AG04450 (cell line): ENCODE measurements at regions of chr11 and their contacts with region 1.

Region 1: DNA sequence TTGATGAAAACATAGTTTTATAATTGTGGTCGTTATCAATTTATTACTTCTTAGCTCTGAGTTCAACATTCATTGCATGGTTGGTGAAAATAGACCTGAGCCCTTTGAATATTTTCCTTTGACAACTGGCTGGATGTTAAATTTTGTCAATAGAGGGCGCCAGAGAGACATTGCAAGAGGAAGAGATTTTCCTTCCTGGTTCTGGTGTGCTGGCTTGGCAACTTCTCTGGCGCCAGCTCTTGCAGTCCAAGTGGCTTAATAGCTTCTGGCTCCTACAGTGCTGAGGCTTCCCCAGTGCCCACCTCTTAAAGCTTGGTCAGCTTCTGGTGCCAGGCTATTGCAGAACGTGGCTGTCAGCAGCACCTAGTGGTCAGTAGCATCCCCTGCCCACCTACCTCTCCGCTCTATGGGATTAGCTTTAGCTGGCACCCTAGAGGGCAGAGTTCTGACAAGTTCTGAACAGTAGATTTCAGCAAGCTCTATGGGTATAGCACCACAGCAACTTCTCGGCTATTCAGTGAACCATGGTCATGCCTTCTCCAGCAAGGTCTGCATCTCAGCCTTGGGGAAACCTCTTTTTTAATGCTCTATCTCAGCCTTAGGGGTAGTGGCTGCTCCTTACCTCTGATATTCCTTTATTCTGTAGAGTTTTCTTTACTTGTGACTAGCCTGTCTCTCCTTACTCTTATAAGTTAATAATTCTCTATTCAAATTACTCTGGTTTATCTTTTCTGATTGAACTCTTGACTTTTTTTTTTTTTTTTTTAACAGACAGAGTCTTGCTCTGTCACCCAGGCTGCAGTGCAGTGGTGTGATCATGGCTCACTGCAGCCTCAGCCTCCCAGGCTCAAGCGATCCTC is 59.4 kb downstream of the ACER3 start:
- DNase-seq: peak; percentile 65
- H3K4me3 ChIP-seq: no peak overlapping the region
- H3K27ac ChIP-seq: no peak overlapping the region
- H3K27me3 ChIP-seq: no peaks in the 10 kb centered on the region
- CTCF ChIP-seq: peak; percentile 98

Region 2: GRCh38 chr11:76742902-76743301 is 177.2 kb before region 1 on chr11:
- CTCF ChIA-PET with region 1: interaction called, 14 read pairs
- POLR2A ChIA-PET with region 1: no interaction called
- DNase-seq: peak; percentile 23
- H3K4me3 ChIP-seq: no peak overlapping the region
- H3K27ac ChIP-seq: no peak overlapping the region
- H3K27me3 ChIP-seq: peaks cover 5% of the 10 kb centered on the region
- CTCF ChIP-seq: no peak

Region 3: DNA sequence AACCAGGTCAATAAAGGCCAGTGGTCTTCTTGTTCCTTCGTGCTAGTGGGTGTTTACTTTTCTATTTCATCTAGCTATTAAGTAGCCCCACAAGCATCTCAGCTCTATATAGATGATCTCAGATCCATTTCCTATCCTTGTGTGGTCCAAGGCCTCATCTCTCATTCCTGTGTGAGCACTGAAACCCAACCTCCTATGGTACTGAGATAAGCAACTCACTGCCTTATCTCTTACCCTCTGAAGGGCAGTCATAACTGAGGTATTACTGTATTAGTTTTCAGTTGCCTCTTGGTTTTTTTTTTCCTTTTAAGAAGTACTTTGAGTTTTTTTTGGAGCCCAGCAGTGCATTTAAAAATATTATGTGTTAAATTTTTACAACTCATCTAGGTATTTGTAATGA is 31.1 kb before region 1 on chr11:
- CTCF ChIA-PET with region 1: interaction called, 48 read pairs
- POLR2A ChIA-PET with region 1: no interaction called
- DNase-seq: no peak
- H3K4me3 ChIP-seq: no peak overlapping the region
- H3K27ac ChIP-seq: no peak overlapping the region
- H3K27me3 ChIP-seq: no peaks in the 10 kb centered on the region
- CTCF ChIP-seq: no peak

Region 4: DNA sequence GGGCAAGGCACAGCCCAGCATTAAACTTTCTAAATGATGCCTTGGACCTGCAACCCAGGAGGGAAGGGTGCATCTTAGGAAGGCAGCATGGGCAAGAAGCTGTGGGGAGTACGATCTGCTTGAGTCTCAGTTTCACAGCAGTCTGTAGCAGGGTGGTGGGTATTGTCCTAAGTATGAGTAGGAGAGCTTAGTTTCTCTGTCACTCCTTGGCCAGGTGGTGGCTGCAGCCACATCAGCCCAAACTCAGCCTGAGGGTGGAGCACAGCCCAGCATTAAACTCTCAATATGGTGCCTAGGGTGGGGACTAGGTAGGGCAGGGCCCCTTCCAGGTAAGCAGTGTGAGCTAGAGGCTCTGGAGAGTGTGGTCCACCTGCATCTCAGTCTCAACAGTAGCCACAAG is 26.1 kb after region 1 on chr11:
- CTCF ChIA-PET with region 1: interaction called, 15 read pairs
- POLR2A ChIA-PET with region 1: no interaction called
- DNase-seq: no peak
- H3K4me3 ChIP-seq: no peak overlapping the region
- H3K27ac ChIP-seq: no peak overlapping the region
- H3K27me3 ChIP-seq: no peaks in the 10 kb centered on the region
- CTCF ChIP-seq: no peak

Region 5: DNA sequence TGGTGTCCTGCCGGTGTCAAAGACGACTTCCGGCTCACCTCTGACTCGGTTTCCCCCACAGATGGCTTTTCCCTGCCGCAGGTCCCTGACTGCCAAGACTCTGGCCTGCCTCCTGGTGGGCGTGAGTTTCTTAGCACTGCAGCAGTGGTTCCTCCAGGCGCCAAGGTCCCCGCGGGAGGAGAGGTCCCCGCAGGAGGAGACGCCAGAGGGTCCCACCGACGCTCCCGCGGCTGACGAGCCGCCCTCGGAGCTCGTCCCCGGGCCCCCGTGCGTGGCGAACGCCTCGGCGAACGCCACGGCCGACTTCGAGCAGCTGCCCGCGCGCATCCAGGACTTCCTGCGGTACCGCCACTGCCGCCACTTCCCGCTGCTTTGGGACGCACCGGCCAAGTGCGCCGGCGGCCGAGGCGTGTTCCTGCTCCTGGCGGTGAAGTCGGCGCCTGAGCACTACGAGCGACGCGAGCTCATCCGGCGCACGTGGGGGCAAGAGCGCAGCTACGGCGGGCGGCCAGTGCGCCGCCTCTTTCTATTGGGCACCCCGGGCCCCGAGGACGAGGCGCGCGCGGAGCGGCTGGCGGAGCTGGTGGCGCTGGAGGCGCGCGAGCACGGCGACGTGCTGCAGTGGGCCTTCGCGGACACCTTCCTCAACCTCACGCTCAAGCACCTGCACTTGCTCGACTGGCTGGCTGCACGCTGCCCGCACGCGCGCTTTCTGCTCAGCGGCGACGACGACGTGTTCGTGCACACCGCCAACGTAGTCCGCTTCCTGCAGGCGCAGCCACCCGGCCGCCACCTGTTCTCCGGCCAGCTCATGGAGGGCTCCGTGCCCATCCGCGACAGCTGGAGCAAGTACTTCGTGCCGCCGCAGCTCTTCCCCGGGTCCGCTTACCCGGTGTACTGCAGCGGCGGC is 119.6 kb after region 1 on chr11:
- CTCF ChIA-PET with region 1: interaction called, 16 read pairs
- POLR2A ChIA-PET with region 1: no interaction called
- DNase-seq: no peak
- H3K4me3 ChIP-seq: peak overlapping the region; percentile 43
- H3K27ac ChIP-seq: no peak overlapping the region
- H3K27me3 ChIP-seq: peaks cover 14% of the 10 kb centered on the region
- CTCF ChIP-seq: peak; percentile 58

Region 6: DNA sequence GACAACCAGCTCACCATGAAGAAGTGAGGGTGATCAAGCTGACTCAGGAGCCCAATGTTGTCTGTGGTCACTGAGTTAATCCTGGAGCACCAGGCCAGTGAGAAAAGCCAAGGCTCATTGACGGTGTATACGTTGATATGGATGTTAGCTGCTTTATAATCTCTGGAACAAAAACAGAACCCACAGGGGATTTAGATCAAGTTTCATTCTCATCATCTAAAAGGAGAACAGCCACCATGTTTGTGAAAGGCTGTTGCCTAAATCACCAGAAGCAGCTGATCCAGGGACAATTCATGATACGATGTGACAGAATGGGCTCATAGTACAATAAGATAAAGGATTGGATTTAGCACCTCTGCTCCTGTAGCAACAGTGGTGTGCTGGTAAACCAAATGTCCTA is 312.9 kb after region 1 on chr11:
- CTCF ChIA-PET with region 1: no interaction called
- POLR2A ChIA-PET with region 1: no interaction called
- DNase-seq: no peak
- H3K4me3 ChIP-seq: no peak overlapping the region
- H3K27ac ChIP-seq: no peak overlapping the region
- H3K27me3 ChIP-seq: no peaks in the 10 kb centered on the region
- CTCF ChIP-seq: no peak

Region 7: DNA sequence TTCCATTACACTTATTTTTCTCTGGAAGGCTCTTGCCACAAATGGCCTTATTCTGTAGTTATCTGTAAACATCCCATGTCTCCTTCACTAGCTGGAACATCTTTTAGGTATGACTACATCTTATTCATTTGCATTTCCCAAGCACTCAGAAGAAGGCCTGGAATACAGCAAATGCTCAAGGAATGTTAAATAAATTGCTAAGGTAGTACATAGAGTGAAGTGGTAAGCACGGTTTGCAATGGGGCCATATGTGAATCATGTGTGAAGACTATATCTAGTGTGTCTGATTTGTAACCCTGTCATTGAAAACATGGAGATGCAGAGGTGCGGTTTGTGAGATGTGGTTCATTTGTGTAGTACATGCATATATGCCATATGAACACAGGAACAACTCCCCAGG is 347.8 kb after region 1 on chr11:
- CTCF ChIA-PET with region 1: no interaction called
- POLR2A ChIA-PET with region 1: no interaction called
- DNase-seq: peak; percentile 80
- H3K4me3 ChIP-seq: no peak overlapping the region
- H3K27ac ChIP-seq: peak overlapping the region; percentile 77
- H3K27me3 ChIP-seq: no peaks in the 10 kb centered on the region
- CTCF ChIP-seq: no peak